ENCODE measurements at regions of chr10 and their contacts with region 1.

Region 1: GRCh38 chr10:12663863-12664262 is 314.5 kb downstream of the CAMK1D start:
- DNase-seq: no peak
- H3K4me3 ChIP-seq: no peak overlapping the region
- H3K27ac ChIP-seq: no peak overlapping the region
- H3K4me1 ChIP-seq: no peaks in the 10 kb centered on the region
- H3K27me3 ChIP-seq: no peaks in the 10 kb centered on the region
- CTCF ChIP-seq: no peak
- POLR2A ChIP-seq: no peak

Region 2: DNA sequence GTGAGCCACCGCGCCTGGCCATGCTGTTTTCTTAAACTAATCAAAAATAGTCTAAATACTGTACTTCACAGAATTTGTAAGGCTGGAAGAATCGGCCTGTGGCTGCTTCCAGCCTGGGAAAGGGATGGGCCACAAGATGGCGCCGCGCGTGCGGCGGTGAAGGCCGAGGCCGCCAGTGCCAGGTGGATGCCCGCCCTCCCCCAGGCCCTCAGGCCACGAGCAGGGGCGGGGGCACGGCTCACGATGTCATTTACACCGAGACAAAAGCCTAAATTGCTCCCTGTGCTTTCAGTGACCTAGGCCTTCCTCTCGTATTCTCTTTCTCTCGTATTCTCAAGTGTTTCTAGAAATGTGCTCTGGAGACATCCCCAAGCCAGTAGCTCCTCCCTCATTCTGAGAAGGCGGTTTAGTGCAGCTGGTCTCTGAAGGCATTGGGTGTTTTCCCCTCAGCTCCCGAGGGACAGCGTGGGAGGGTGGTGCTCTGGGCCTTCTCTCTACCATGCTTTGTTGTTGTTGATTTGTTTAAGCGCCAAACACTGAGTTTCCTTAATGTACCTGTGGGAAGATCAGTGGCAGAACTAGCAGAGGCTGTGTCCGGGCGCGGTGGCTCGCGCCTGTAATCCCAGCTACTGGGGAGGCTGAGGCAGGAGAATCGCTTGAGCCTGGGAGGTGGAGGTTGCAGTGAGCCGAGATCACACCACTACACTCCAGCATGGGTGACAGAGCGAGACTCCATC is 399.5 kb before region 1 on chr10:
- intact Hi-C with region 1: loop called (anchors 5 kb)
- DNase-seq: peak; percentile 32
- H3K4me3 ChIP-seq: peak overlapping the region; percentile 13 to 64 (median 40)
- H3K27ac ChIP-seq: peak overlapping the region; percentile 37 to 77 (median 64)
- H3K4me1 ChIP-seq: peaks cover 3 to 25% (median 10%) of the 10 kb centered on the region in 3 donors
- H3K27me3 ChIP-seq: no peaks in the 10 kb centered on the region
- CTCF ChIP-seq: peak; percentile 64 to 91 (median 84)
- POLR2A ChIP-seq: no peak

Region 3: GRCh38 chr10:13485623-13486022 is 821.8 kb after region 1 on chr10:
- intact Hi-C with region 1: no loop called
- DNase-seq: no peak
- H3K4me3 ChIP-seq: no peak overlapping the region
- H3K27ac ChIP-seq: no peak overlapping the region
- H3K4me1 ChIP-seq: peaks cover 0 to 21% (median 0%) of the 10 kb centered on the region in 3 donors
- H3K27me3 ChIP-seq: peaks cover 0 to 26% (median 2%) of the 10 kb centered on the region in 4 donors
- CTCF ChIP-seq: peak in 1 of 6 experiments; percentile 19
- POLR2A ChIP-seq: no peak

Measured in esophagus squamous epithelium (tissue), 5 donors.